ENCODE measurements at regions of chr9 and their contacts with region 1.

Region 1: GRCh38 chr9:129320575-129321263 is 142.7 kb upstream of the IER5L start:
- DNase-seq: peak; percentile 41 to 81 (median 76)
- ATAC-seq: peak; percentile 96
- H3K4me3 ChIP-seq: peak overlapping the region; percentile 61
- H3K4me3 Mint-ChIP-seq: peak overlapping the region; percentile 74 to 94 (median 87)
- H3K27ac ChIP-seq: peak overlapping the region; percentile 63
- H3K27ac Mint-ChIP-seq: peak overlapping the region; percentile 70 to 96 (median 92)
- H3K4me1 ChIP-seq: peaks cover 12 to 17% of the 10 kb centered on the region in 2 donors
- H3K4me1 Mint-ChIP-seq: peaks cover 11 to 22% (median 13%) of the 10 kb centered on the region in 7 donors
- H3K27me3 ChIP-seq: no peaks in the 10 kb centered on the region
- H3K27me3 Mint-ChIP-seq: no peaks in the 10 kb centered on the region

Region 2: GRCh38 chr9:129202613-129203555 is 117.8 kb before region 1 on chr9:
- CTCF ChIA-PET with region 1: interaction called, 4 read pairs
- POLR2A ChIA-PET with region 1: interaction called, 4 read pairs
- intact Hi-C with region 1: loop called in 1 of 2 experiments (anchors 10 kb)
- DNase-seq: peak; percentile 84 to 96 (median 92)
- ATAC-seq: peak; percentile 99
- H3K4me3 ChIP-seq: peak overlapping the region; percentile 77
- H3K4me3 Mint-ChIP-seq: peak overlapping the region; percentile 64 to 82 (median 74)
- H3K27ac ChIP-seq: peak overlapping the region; percentile 83
- H3K27ac Mint-ChIP-seq: peak overlapping the region in 8 of 9 donors; percentile 64 to 91 (median 84)
- H3K4me1 ChIP-seq: peaks cover 21 to 23% of the 10 kb centered on the region in 2 donors
- H3K4me1 Mint-ChIP-seq: peaks cover 13 to 26% (median 20%) of the 10 kb centered on the region in 7 donors
- H3K27me3 ChIP-seq: no peaks in the 10 kb centered on the region
- H3K27me3 Mint-ChIP-seq: peaks cover 0 to 11% (median 0%) of the 10 kb centered on the region in 5 donors

Region 3: DNA sequence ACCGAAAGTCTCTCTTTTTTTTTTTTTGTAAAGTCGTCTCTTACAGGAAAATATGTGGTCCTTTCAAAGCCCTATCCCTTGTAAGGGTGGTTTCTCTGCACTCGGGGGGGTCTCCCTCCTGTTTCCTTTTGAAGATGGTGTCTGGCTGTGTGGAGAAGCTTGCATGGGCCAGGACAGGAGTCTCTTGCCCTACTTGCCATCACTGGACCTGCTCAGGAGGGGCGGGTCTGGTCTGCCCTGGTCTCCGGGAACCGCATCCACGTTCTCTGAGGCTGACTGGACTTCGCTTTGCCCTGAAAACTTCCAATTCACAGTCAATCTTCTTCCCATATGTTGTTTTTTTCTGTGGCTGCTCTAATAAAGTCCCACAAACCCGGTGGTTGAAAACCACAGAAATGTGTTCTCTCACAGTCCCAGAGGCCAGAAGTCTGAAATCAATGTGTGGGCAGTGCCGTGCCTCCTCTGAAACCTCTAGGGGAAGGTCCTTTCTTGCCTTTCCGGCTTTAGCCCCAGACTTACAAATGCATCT is 49.8 kb before region 1 on chr9:
- CTCF ChIA-PET with region 1: no interaction called
- POLR2A ChIA-PET with region 1: interaction called, 3 read pairs
- intact Hi-C with region 1: loop called (anchors 5 to 10 kb)
- DNase-seq: peak in 4 of 9 donors; percentile 6 to 20 (median 10)
- ATAC-seq: peak; percentile 42
- H3K4me3 ChIP-seq: peak overlapping the region; percentile 28
- H3K4me3 Mint-ChIP-seq: peak overlapping the region; percentile 41 to 81 (median 72)
- H3K27ac ChIP-seq: no peak overlapping the region
- H3K27ac Mint-ChIP-seq: peak overlapping the region; percentile 33 to 89 (median 82)
- H3K4me1 ChIP-seq: peaks cover 20 to 22% of the 10 kb centered on the region in 2 donors
- H3K4me1 Mint-ChIP-seq: peaks cover 18 to 37% (median 27%) of the 10 kb centered on the region in 7 donors
- H3K27me3 ChIP-seq: peaks cover 0 to 2% of the 10 kb centered on the region in 2 donors
- H3K27me3 Mint-ChIP-seq: peaks cover 0 to 20% (median 0%) of the 10 kb centered on the region in 5 donors

Region 4: DNA sequence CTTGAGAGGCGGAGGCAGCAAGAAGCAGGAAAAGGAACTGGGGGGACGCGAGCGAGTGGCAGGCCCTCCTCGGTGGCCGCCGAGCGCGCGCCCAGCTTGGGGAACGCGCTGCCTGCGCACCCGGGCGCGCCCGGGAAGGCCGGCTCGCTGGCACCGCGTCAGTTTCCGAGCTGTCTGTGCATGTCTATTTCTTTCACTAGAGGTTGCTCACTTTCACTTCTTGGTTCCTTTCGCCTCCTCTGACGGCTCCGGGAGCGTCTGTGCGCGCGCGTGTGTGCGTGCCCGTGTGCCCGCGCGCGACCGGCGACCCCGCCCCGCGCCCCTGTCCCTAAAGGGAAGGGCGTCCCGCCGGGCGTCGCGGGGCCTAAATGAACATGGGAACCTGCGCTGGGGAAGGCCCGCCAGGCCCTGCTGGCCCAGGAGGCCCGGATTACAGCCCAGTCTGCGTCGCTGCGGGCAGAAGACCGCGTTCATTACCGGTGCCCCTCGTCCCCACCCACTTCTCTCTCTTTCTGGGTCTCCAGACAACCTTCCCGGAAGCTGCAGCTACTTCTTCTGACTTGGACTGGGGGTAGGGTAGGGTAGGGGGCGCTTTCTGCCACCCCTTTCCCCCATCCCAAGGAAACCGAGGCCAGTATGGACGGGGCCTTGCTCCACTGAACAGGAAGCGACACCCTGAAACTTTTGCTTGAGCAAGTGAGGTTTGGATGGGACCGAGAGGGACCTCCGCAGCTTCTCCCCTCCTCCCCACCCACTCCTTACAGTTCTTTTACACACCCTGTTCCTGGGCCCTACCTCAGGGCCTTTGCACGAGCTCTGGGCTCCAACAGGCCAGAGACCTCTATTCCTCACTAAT is 63.1 kb after region 1 on chr9:
- CTCF ChIA-PET with region 1: interaction called, 3 read pairs
- POLR2A ChIA-PET with region 1: interaction called, 8 read pairs
- intact Hi-C with region 1: loop called in 1 of 2 experiments (anchors 2 kb)
- DNase-seq: peak; percentile 60 to 87 (median 79)
- ATAC-seq: peak; percentile 96
- H3K4me3 ChIP-seq: peak overlapping the region; percentile 62
- H3K4me3 Mint-ChIP-seq: peak overlapping the region; percentile 70 to 86 (median 82)
- H3K27ac ChIP-seq: peak overlapping the region; percentile 82
- H3K27ac Mint-ChIP-seq: peak overlapping the region; percentile 72 to 96 (median 92)
- H3K4me1 ChIP-seq: peaks cover 0 to 12% of the 10 kb centered on the region in 2 donors
- H3K4me1 Mint-ChIP-seq: peaks cover 8 to 19% (median 10%) of the 10 kb centered on the region in 7 donors
- H3K27me3 ChIP-seq: no peaks in the 10 kb centered on the region
- H3K27me3 Mint-ChIP-seq: peaks cover 0 to 9% (median 0%) of the 10 kb centered on the region in 5 donors

Region 5: GRCh38 chr9:129487642-129488409 is 167.1 kb after region 1 on chr9:
- CTCF ChIA-PET with region 1: no interaction called
- POLR2A ChIA-PET with region 1: interaction called, 3 read pairs
- intact Hi-C with region 1: loop called in 1 of 2 experiments (anchors 5 kb)
- DNase-seq: peak in 5 of 9 donors; percentile 29 to 54 (median 43)
- ATAC-seq: peak; percentile 3
- H3K4me3 ChIP-seq: peak overlapping the region; percentile 70
- H3K4me3 Mint-ChIP-seq: peak overlapping the region; percentile 75 to 92 (median 90)
- H3K27ac ChIP-seq: peak overlapping the region; percentile 66
- H3K27ac Mint-ChIP-seq: peak overlapping the region; percentile 87 to 99 (median 94)
- H3K4me1 ChIP-seq: peaks cover 32 to 46% of the 10 kb centered on the region in 2 donors
- H3K4me1 Mint-ChIP-seq: peaks cover 36 to 68% (median 58%) of the 10 kb centered on the region in 7 donors
- H3K27me3 ChIP-seq: no peaks in the 10 kb centered on the region
- H3K27me3 Mint-ChIP-seq: no peaks in the 10 kb centered on the region

Region 6: GRCh38 chr9:129610473-129611301 is 290.0 kb after region 1 on chr9:
- CTCF ChIA-PET with region 1: interaction called, 4 read pairs
- POLR2A ChIA-PET with region 1: interaction called, 4 read pairs
- intact Hi-C with region 1: loop called (anchors 1 to 5 kb)
- DNase-seq: peak; percentile 53 to 79 (median 71)
- ATAC-seq: peak; percentile 83
- H3K4me3 ChIP-seq: peak overlapping the region; percentile 52
- H3K4me3 Mint-ChIP-seq: peak overlapping the region; percentile 57 to 96 (median 80)
- H3K27ac ChIP-seq: peak overlapping the region; percentile 17
- H3K27ac Mint-ChIP-seq: peak overlapping the region in 5 of 9 donors; percentile 62 to 85 (median 67)
- H3K4me1 ChIP-seq: peaks cover 19 to 21% of the 10 kb centered on the region in 2 donors
- H3K4me1 Mint-ChIP-seq: peaks cover 13 to 44% (median 30%) of the 10 kb centered on the region in 7 donors
- H3K27me3 ChIP-seq: no peaks in the 10 kb centered on the region
- H3K27me3 Mint-ChIP-seq: peaks cover 0 to 4% (median 0%) of the 10 kb centered on the region in 5 donors